CD8-positive, alpha-beta T cell (primary cell): ENCODE measurements at regions of chr9 and their contacts with region 1.

Region 1: GRCh38 chr9:99906403-99907207 is at the start of gene STX17:
- DNase-seq: peak; percentile 64 to 92 (median 84)
- ATAC-seq: peak; percentile 85
- H3K4me3 ChIP-seq: peak within 1 kb of the TSS; percentile 95 to 96
- H3K4me3 Mint-ChIP-seq: peak within 1 kb of the TSS; percentile 97
- H3K27ac ChIP-seq: peak within 1 kb of the TSS; percentile 98 to 99
- H3K27ac Mint-ChIP-seq: peak within 1 kb of the TSS; percentile 100
- H3K4me1 ChIP-seq: peaks cover 20% of the 10 kb centered on the region
- H3K4me1 Mint-ChIP-seq: peaks cover 33% of the 10 kb centered on the region
- H3K27me3 ChIP-seq: no peaks in the 10 kb centered on the region
- H3K27me3 Mint-ChIP-seq: no peaks in the 10 kb centered on the region
- CTCF ChIP-seq: no peak
- total RNA-seq, gene STX17: 21.0 to 23.1 TPM

Region 2: GRCh38 chr9:99221621-99222415 is 684.8 kb before region 1 on chr9 and contains the starts of genes ALG2 and SEC61B:
- CTCF ChIA-PET with region 1: no interaction called
- POLR2A ChIA-PET with region 1: no interaction called
- intact Hi-C with region 1: loop called in 1 of 2 experiments (anchors 5 kb)
- DNase-seq: peak; percentile 87 to 96 (median 94)
- ATAC-seq: peak; percentile 88
- H3K4me3 ChIP-seq: peak within 1 kb of the TSS; percentile 79 to 90
- H3K4me3 Mint-ChIP-seq: peak within 1 kb of the TSS; percentile 99
- H3K27ac ChIP-seq: peak within 1 kb of the TSS; percentile 95 to 99
- H3K27ac Mint-ChIP-seq: peak within 1 kb of the TSS; percentile 100
- H3K4me1 ChIP-seq: peaks cover 30% of the 10 kb centered on the region
- H3K4me1 Mint-ChIP-seq: peaks cover 80% of the 10 kb centered on the region
- H3K27me3 ChIP-seq: no peaks in the 10 kb centered on the region
- H3K27me3 Mint-ChIP-seq: no peaks in the 10 kb centered on the region
- CTCF ChIP-seq: no peak
- total RNA-seq, gene ALG2: 21.0 to 24.7 TPM
- total RNA-seq, gene SEC61B: 107 to 108 TPM

Region 3: DNA sequence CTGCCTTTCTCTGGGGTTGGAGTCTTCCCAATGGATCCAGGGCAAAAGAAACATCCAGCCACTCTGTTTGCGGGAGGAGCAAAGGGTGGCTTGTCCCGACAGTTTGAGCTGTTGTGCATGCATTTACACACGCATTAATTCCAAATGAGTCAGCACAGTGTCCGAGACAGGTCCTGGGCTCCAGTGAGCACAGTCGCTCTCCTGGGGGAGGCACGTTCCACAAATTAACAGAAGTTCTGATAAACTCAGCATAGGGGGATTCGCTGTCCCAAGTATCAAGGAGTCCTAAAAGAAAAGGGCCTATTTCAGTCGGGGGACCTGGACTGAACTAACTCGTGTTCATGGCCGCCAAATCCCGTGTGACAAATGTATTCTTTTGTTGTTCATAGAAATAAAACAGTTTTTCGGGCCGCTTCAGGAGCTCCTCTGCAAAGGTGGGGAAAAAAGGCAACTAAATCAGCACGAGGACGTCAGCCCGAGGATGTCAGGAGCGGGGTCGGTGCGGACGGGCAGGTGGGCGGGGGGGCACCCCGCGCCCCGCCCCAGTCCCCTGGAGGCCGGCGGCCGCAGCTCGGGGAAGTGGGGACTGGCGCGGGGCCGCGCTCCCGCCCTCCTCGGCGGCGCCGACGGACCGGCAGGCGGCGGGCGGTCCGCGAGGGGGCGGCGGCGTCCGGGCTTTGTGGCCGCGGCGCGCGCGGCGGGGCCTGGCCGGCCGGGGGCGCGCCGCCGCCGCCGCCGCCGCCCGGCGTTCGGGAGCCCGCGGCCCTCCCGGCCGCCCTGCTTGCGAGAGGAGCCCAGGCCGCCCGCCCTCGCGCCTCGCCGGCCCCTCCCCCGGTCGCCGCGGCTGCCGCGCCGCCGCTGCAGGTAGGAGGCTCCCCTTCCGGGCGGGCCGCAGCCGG is 520.2 kb after region 1 on chr9 and contains the start of gene MSANTD3:
- CTCF ChIA-PET with region 1: no interaction called
- POLR2A ChIA-PET with region 1: no interaction called
- intact Hi-C with region 1: loop called in 1 of 2 experiments (anchors 5 kb)
- DNase-seq: peak; percentile 20 to 78 (median 58)
- ATAC-seq: peak; percentile 84
- H3K4me3 ChIP-seq: peak within 1 kb of the TSS; percentile 69 to 74
- H3K4me3 Mint-ChIP-seq: peak within 1 kb of the TSS; percentile 97
- H3K27ac ChIP-seq: peak within 1 kb of the TSS; percentile 31 to 35
- H3K27ac Mint-ChIP-seq: peak within 1 kb of the TSS; percentile 95
- H3K4me1 ChIP-seq: peaks cover 18% of the 10 kb centered on the region
- H3K4me1 Mint-ChIP-seq: peaks cover 35% of the 10 kb centered on the region
- H3K27me3 ChIP-seq: no peaks in the 10 kb centered on the region
- H3K27me3 Mint-ChIP-seq: peaks cover 4% of the 10 kb centered on the region
- CTCF ChIP-seq: no peak
- total RNA-seq, gene MSANTD3: 10.2 to 10.8 TPM

Region 4: GRCh38 chr9:101398068-101398929 is 1491.7 kb after region 1 on chr9 and contains the starts of genes MRPL50 and ZNF189:
- CTCF ChIA-PET with region 1: no interaction called
- POLR2A ChIA-PET with region 1: no interaction called
- intact Hi-C with region 1: loop called (anchors 5 kb)
- DNase-seq: peak; percentile 89 to 99 (median 95)
- ATAC-seq: peak; percentile 93
- H3K4me3 ChIP-seq: peak within 1 kb of the TSS; percentile 87 to 91
- H3K4me3 Mint-ChIP-seq: peak within 1 kb of the TSS; percentile 97
- H3K27ac ChIP-seq: peak within 1 kb of the TSS; percentile 96 to 98
- H3K27ac Mint-ChIP-seq: peak within 1 kb of the TSS; percentile 99
- H3K4me1 ChIP-seq: peaks cover 54% of the 10 kb centered on the region
- H3K4me1 Mint-ChIP-seq: peaks cover 80% of the 10 kb centered on the region
- H3K27me3 ChIP-seq: no peaks in the 10 kb centered on the region
- H3K27me3 Mint-ChIP-seq: no peaks in the 10 kb centered on the region
- CTCF ChIP-seq: no peak
- total RNA-seq, gene MRPL50: 7.5 to 8.4 TPM
- total RNA-seq, gene ZNF189: 4.0 to 5.2 TPM